ENCODE measurements at regions of chr5 and their contacts with region 1.

Region 1: DNA sequence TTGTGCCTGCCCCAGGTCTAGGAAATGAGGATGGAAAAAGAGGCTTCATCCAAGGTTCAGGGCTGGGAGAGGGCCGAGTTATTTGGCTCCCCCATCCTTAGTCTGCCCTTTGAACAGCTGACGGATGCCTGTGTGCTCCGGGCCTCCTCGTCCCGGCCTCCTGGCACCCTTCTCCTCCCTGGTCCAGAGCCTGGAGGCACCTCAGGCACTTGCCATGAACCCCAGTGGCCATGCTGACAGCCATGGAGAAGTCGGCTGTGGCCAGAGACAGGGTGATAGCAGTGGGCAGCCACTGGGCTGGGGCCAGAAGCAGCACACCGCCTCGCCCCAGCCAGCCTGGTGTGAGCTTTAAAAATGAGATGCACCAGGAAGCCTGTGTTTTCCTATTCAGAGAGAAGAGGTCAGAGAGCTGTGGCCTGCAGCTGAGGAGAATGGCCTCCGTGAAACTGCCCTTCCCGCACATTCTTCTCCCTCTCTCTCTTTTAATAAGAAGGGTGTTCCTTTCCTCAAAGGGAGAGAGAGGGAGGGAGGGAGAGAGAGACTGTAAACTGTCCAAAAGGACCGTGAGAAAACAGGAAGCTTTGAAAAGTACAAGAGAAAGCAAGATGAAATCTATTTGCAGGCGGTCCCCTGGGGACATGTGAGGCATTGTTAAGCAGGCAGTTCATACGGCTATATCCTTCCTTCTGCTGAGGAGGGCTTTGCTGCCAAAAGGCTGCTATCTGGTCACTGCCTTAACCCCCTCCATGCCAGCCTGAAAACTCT is 55.3 kb downstream of the ZNF366 start:
- DNase-seq: peak; percentile 86
- H3K4me3 Mint-ChIP-seq: no peak overlapping the region
- H3K27ac Mint-ChIP-seq: peak overlapping the region; percentile 92
- H3K4me1 Mint-ChIP-seq: peaks cover 27% of the 10 kb centered on the region
- H3K27me3 Mint-ChIP-seq: no peaks in the 10 kb centered on the region
- CTCF ChIP-seq: no peak

Region 2: GRCh38 chr5:72387985-72388384 is 63.9 kb before region 1 on chr5:
- CTCF ChIA-PET with region 1: no interaction called
- POLR2A ChIA-PET with region 1: interaction called, 10 read pairs
- intact Hi-C with region 1: no loop called
- DNase-seq: peak; percentile 71
- H3K4me3 Mint-ChIP-seq: peak overlapping the region; percentile 20
- H3K27ac Mint-ChIP-seq: peak overlapping the region; percentile 91
- H3K4me1 Mint-ChIP-seq: peaks cover 65% of the 10 kb centered on the region
- H3K27me3 Mint-ChIP-seq: no peaks in the 10 kb centered on the region
- CTCF ChIP-seq: no peak

Region 3: GRCh38 chr5:72465601-72466563 is 14.0 kb after region 1 on chr5:
- CTCF ChIA-PET with region 1: interaction called, 5 read pairs
- POLR2A ChIA-PET with region 1: interaction called, 65 read pairs
- intact Hi-C with region 1: no loop called
- DNase-seq: no peak
- H3K4me3 Mint-ChIP-seq: no peak overlapping the region
- H3K27ac Mint-ChIP-seq: peak overlapping the region; percentile 3
- H3K4me1 Mint-ChIP-seq: peaks cover 46% of the 10 kb centered on the region
- H3K27me3 Mint-ChIP-seq: no peaks in the 10 kb centered on the region
- CTCF ChIP-seq: no peak

Region 4: GRCh38 chr5:72486371-72486770 is 34.4 kb after region 1 on chr5:
- CTCF ChIA-PET with region 1: no interaction called
- POLR2A ChIA-PET with region 1: interaction called, 17 read pairs
- intact Hi-C with region 1: no loop called
- DNase-seq: no peak
- H3K4me3 Mint-ChIP-seq: no peak overlapping the region
- H3K27ac Mint-ChIP-seq: peak overlapping the region; percentile 96
- H3K4me1 Mint-ChIP-seq: peaks cover 27% of the 10 kb centered on the region
- H3K27me3 Mint-ChIP-seq: no peaks in the 10 kb centered on the region
- CTCF ChIP-seq: no peak

Region 5: GRCh38 chr5:72543365-72543764 is 91.4 kb after region 1 on chr5:
- CTCF ChIA-PET with region 1: no interaction called
- POLR2A ChIA-PET with region 1: no interaction called
- intact Hi-C with region 1: no loop called
- DNase-seq: peak; percentile 77
- H3K4me3 Mint-ChIP-seq: peak overlapping the region; percentile 24
- H3K27ac Mint-ChIP-seq: peak overlapping the region; percentile 56
- H3K4me1 Mint-ChIP-seq: peaks cover 55% of the 10 kb centered on the region
- H3K27me3 Mint-ChIP-seq: no peaks in the 10 kb centered on the region
- CTCF ChIP-seq: no peak

Measured in MCF 10A (cell line).